ENCODE measurements at regions of chr12 and their contacts with region 1.

Region 1: GRCh38 chr12:93668919-93669418 is 8.2 kb upstream of the CRADD start:
- DNase-seq: no peak
- ATAC-seq: no peak
- H3K4me3 ChIP-seq: no peak overlapping the region
- H3K4me3 Mint-ChIP-seq: no peak overlapping the region
- H3K27ac ChIP-seq: no peak overlapping the region
- H3K27ac Mint-ChIP-seq: no peak overlapping the region
- H3K4me1 ChIP-seq: no peaks in the 10 kb centered on the region
- H3K4me1 Mint-ChIP-seq: no peaks in the 10 kb centered on the region
- H3K27me3 ChIP-seq: no peaks in the 10 kb centered on the region
- H3K27me3 Mint-ChIP-seq: peaks cover 9% of the 10 kb centered on the region
- CTCF ChIP-seq: no peak

Region 2: DNA sequence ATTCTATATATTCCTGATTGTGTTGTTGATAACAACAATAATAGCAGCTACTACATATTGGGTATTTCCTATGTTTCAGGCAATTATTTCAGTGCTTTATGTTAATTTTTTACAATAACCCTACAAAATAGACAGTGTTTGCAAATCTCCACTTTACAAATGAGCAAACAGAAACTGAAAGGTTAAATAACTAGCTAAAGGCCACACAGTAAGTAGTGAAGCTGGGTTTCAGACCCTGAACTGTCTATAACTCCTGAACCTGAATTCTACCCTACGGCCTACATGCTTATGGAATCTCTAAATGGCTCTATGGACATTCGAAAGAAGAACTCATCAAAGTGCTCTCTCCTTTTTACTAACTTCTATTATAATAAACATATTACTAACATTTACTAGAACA is 310.9 kb before region 1 on chr12:
- CTCF ChIA-PET with region 1: no interaction called
- POLR2A ChIA-PET with region 1: no interaction called
- intact Hi-C with region 1: loop called in 1 of 2 experiments (anchors 10 kb)
- DNase-seq: no peak
- ATAC-seq: no peak
- H3K4me3 ChIP-seq: no peak overlapping the region
- H3K4me3 Mint-ChIP-seq: no peak overlapping the region
- H3K27ac ChIP-seq: no peak overlapping the region
- H3K27ac Mint-ChIP-seq: no peak overlapping the region
- H3K4me1 ChIP-seq: peaks cover under 1% of the 10 kb centered on the region
- H3K4me1 Mint-ChIP-seq: peaks cover 6% of the 10 kb centered on the region
- H3K27me3 ChIP-seq: no peaks in the 10 kb centered on the region
- H3K27me3 Mint-ChIP-seq: no peaks in the 10 kb centered on the region
- CTCF ChIP-seq: no peak

Region 3: DNA sequence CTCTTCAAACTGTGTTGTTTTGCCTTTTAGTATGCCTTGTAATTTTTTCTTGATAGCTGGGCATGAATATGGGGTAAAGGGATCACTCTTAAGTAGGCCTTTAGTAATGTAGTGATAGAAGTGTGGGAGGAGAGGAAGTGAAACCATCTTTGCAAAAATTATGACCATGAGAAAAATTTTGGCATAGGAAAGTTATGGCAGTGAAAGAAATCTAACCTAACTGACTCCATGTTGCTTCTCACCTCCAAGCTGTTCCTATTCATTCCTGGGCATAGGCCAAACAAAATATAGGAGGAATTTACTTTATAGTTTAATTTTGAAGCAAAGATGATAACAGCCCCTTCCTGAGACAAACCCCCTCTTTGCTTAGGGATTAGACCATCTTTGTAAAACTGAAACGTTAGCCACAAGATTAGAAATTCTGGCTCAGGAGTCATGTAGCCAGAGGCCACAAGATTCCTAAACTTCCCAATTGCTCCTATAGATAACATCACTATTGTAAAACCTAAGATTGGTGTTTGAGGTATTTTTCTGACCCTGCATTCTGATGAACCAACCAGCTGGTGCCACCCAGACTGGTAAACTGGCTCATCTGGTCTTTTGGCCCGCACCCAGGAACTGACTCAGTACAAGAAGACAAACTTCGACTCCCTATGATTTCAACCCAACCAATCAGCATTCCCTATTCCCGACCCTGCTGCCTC is 54.0 kb after region 1 on chr12:
- CTCF ChIA-PET with region 1: no interaction called
- POLR2A ChIA-PET with region 1: no interaction called
- intact Hi-C with region 1: no loop called
- DNase-seq: no peak
- ATAC-seq: no peak
- H3K4me3 ChIP-seq: no peak overlapping the region
- H3K4me3 Mint-ChIP-seq: no peak overlapping the region
- H3K27ac ChIP-seq: no peak overlapping the region
- H3K27ac Mint-ChIP-seq: no peak overlapping the region
- H3K4me1 ChIP-seq: no peaks in the 10 kb centered on the region
- H3K4me1 Mint-ChIP-seq: peaks cover 6% of the 10 kb centered on the region
- H3K27me3 ChIP-seq: no peaks in the 10 kb centered on the region
- H3K27me3 Mint-ChIP-seq: no peaks in the 10 kb centered on the region
- CTCF ChIP-seq: no peak